ENCODE measurements at regions of chr7 and their contacts with region 1.

Region 1: GRCh38 chr7:156892821-156893706 is at the start of gene LMBR1:
- DNase-seq: peak; percentile 100

Region 2: GRCh38 chr7:156903232-156903909 is 10.3 kb after region 1 on chr7:
- CTCF ChIA-PET with region 1: no interaction called
- POLR2A ChIA-PET with region 1: interaction called, 21 read pairs
- DNase-seq: no peak

Region 3: DNA sequence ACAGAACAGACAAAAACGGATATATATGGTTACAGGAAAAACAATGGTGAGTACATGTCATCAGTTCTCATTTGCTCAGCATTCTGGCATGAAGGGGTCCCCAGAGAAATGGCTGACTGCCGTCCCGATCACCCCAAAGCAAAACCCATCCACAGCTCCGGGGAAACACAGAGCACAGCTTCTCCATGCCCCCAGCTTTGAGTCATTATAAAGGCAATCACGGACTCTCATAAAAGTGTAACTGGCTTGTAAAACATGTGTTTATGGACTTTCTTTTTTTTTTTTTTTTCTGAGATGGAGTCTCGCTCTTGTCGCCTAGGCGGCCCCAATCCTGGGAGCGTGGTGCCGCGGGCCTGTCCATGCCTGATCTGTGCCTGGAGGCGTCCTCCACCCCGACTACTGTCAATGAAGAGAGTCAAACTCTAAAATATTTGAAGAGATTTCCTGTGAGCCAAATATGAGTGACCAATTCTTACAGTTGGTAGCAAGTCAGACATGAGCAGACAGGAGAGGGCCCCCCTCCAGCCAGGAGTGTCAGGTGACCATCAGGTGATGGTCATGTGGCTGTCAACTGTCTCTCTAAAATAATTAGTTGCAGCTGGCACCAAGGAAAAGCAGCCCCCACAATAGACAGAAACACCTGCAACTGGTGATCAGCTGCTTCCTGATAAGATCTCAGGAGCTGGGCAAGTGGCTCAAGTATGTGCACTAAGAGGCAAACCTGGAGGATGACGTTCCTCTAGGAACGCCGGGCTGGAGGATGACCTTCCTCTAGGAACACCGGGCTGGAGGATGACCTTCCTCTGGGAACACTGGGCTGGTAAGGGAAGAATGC is 34.7 kb after region 1 on chr7:
- CTCF ChIA-PET with region 1: interaction called, 3 read pairs
- POLR2A ChIA-PET with region 1: interaction called, 15 read pairs
- DNase-seq: no peak

Region 4: DNA sequence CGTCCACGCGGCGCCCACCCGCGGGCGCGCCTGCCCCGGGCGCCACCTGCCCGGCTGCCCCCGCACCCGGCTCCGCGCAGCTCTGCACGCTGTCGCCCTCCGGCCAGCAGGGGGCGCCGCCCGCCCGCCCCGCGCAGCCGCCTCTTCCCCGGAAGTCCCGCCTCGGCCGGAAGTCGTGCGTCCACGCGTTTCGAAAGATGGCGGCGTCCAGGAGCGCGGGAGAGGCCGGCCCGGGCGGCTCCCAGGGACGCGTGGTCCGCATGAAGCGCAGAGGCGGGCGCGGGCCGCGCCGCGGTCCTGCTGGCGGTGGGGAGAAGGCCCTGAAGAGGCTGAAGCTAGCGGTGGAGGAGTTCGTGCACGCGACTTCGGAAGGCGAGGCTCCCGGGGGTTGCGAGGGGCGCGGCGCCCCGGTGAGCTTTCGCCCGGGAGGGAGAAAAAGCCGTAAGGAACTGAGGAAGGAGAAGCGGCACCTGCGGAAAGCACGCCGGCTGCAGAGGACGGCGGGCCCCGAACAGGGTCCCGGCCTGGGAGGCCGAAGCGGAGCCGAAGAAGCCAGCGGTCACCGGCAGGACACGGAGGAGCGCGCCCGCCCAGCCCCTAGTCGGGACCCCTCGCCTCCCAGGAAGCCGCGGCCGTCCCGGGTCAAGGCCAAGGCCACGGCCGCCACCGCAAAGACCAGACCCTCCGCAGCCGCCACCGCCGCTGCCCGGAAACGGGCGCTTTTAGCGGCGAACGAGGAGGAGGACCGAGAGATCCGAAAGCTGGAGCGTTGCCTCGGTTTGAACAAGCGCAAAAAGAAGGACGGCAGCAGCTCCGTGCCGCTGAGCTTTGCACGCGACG is 56.7 kb after region 1 on chr7 and contains the start of gene NOM1:
- CTCF ChIA-PET with region 1: interaction called, 3 read pairs
- POLR2A ChIA-PET with region 1: interaction called, 26 read pairs
- DNase-seq: peak; percentile 99